IMR-90 (cell line): ENCODE measurements at regions of chr11 and their contacts with region 1.

Region 1: GRCh38 chr11:101661559-101661958 is 77.8 kb upstream of the TRPC6 start:
- DNase-seq: no peak
- ATAC-seq: no peak
- H3K4me3 ChIP-seq: no peak overlapping the region
- H3K27ac ChIP-seq: no peak overlapping the region
- H3K4me1 ChIP-seq: no peaks in the 10 kb centered on the region
- H3K27me3 ChIP-seq: 0 out of 2 replicates have a peak, but pooled peaks cover 2% of the 10 kb centered on the region
- CTCF ChIP-seq: no peak
- POLR2A ChIP-seq: no peak
- RAD21 ChIP-seq: no peak

Region 2: GRCh38 chr11:100964435-100964834 is 697.1 kb before region 1 on chr11:
- CTCF ChIA-PET with region 1: no interaction called
- POLR2A ChIA-PET with region 1: no interaction called
- dilution Hi-C with region 1: no loop called
- in situ Hi-C with region 1: no loop called
- intact Hi-C with region 1: no loop called
- DNase-seq: peak; percentile 79
- ATAC-seq: peak; percentile 42
- H3K4me3 ChIP-seq: no peak overlapping the region
- H3K27ac ChIP-seq: no peak overlapping the region
- H3K4me1 ChIP-seq: no peaks in the 10 kb centered on the region
- H3K27me3 ChIP-seq: no peaks in the 10 kb centered on the region
- CTCF ChIP-seq: no peak
- POLR2A ChIP-seq: no peak
- RAD21 ChIP-seq: no peak

Region 3: GRCh38 chr11:101817581-101817980 is 156.0 kb after region 1 on chr11:
- CTCF ChIA-PET with region 1: no interaction called
- POLR2A ChIA-PET with region 1: no interaction called
- dilution Hi-C with region 1: no loop called
- in situ Hi-C with region 1: no loop called
- intact Hi-C with region 1: loop called (anchors 5 kb)
- DNase-seq: no peak
- ATAC-seq: no peak
- H3K4me3 ChIP-seq: no peak overlapping the region
- H3K27ac ChIP-seq: no peak overlapping the region
- H3K4me1 ChIP-seq: no peaks in the 10 kb centered on the region
- H3K27me3 ChIP-seq: no peaks in the 10 kb centered on the region
- CTCF ChIP-seq: no peak
- POLR2A ChIP-seq: no peak
- RAD21 ChIP-seq: no peak